CD14-positive monocyte (primary cell): ENCODE measurements at regions of chrX and their contacts with region 1.

Region 1: GRCh38 chrX:13087322-13088155 is 43.1 kb upstream of the FAM9C start:
- DNase-seq: peak; percentile 90 to 94 (median 92)
- H3K4me3 ChIP-seq: peak overlapping the region in 1 of 3 experiments; percentile 2
- H3K4me3 Mint-ChIP-seq: peak overlapping the region; percentile 34 to 46
- H3K27ac ChIP-seq: peak overlapping the region; percentile 95 to 99
- H3K27ac Mint-ChIP-seq: peak overlapping the region; percentile 93 to 98 (median 98)
- H3K4me1 ChIP-seq: peaks cover 96 to 98% of the 10 kb centered on the region in 2 donors
- H3K4me1 Mint-ChIP-seq: peaks cover 80% of the 10 kb centered on the region
- H3K27me3 ChIP-seq: peaks cover 0 to 6% of the 10 kb centered on the region in 2 donors
- H3K27me3 Mint-ChIP-seq: peaks cover 0 to 21% (median 0%) of the 10 kb centered on the region in 3 donors
- CTCF ChIP-seq: no peak

Region 2: GRCh38 chrX:12974796-12975669 is 112.5 kb before region 1 on chrX and contains the start of gene TMSB4X:
- intact Hi-C with region 1: loop called (anchors 5 to 10 kb)
- DNase-seq: peak; percentile 70 to 85 (median 79)
- H3K4me3 ChIP-seq: peak within 1 kb of the TSS; percentile 87 to 97 (median 95)
- H3K4me3 Mint-ChIP-seq: peak within 1 kb of the TSS; percentile 98
- H3K27ac ChIP-seq: peak within 1 kb of the TSS; percentile 93 to 98
- H3K27ac Mint-ChIP-seq: peak within 1 kb of the TSS; percentile 94 to 99 (median 97)
- H3K4me1 ChIP-seq: peaks cover 41 to 77% of the 10 kb centered on the region in 2 donors
- H3K4me1 Mint-ChIP-seq: peaks cover 46% of the 10 kb centered on the region
- H3K27me3 ChIP-seq: peaks cover 0 to 8% of the 10 kb centered on the region in 2 donors
- H3K27me3 Mint-ChIP-seq: peaks cover 0 to 81% (median 0%) of the 10 kb centered on the region in 3 donors
- CTCF ChIP-seq: no peak
- polyA plus RNA-seq, gene TMSB4X: 15,641 to 31,074 (median 27,127) TPM